GM12878 (cell line): ENCODE measurements at regions of chr1 and their contacts with region 1.

Region 1: GRCh38 chr1:74689621-74690363 is 16.2 kb upstream of the ERICH3 start:
- DNase-seq: no peak
- ATAC-seq: peak; percentile 78
- H3K4me3 ChIP-seq: no peak overlapping the region
- H3K27ac ChIP-seq: no peak overlapping the region
- H3K4me1 ChIP-seq: no peaks in the 10 kb centered on the region; the same call in 1 of the 2 replicates
- H3K27me3 ChIP-seq: no peaks in the 10 kb centered on the region
- CTCF ChIP-seq: peak; percentile 63 to 83 (median 78)
- EP300 ChIP-seq: no peak
- POLR2A ChIP-seq: no peak
- RAD21 ChIP-seq: peak; percentile 96

Region 2: GRCh38 chr1:73839922-73840321 is 849.9 kb before region 1 on chr1:
- CTCF ChIA-PET with region 1: interaction called, 16 read pairs
- POLR2A ChIA-PET with region 1: no interaction called
- RAD21 ChIA-PET with region 1: interaction called, 5 read pairs
- SMC1A ChIA-PET with region 1: interaction called, 3 read pairs
- in situ Hi-C with region 1: loop called (anchors 10 kb)
- intact Hi-C with region 1: loop called (anchors 2 kb)
- DNase-seq: no peak
- ATAC-seq: peak; percentile 32; the same call in 1 of the 3 replicates
- H3K4me3 ChIP-seq: no peak overlapping the region
- H3K27ac ChIP-seq: no peak overlapping the region
- H3K4me1 ChIP-seq: no peaks in the 10 kb centered on the region
- H3K27me3 ChIP-seq: no peaks in the 10 kb centered on the region
- CTCF ChIP-seq: peak; percentile 23 to 51 (median 35); a peak in 5 of 6 replicates
- EP300 ChIP-seq: no peak
- POLR2A ChIP-seq: no peak
- RAD21 ChIP-seq: peak; percentile 48; the same call in 1 of the 2 replicates

Region 3: DNA sequence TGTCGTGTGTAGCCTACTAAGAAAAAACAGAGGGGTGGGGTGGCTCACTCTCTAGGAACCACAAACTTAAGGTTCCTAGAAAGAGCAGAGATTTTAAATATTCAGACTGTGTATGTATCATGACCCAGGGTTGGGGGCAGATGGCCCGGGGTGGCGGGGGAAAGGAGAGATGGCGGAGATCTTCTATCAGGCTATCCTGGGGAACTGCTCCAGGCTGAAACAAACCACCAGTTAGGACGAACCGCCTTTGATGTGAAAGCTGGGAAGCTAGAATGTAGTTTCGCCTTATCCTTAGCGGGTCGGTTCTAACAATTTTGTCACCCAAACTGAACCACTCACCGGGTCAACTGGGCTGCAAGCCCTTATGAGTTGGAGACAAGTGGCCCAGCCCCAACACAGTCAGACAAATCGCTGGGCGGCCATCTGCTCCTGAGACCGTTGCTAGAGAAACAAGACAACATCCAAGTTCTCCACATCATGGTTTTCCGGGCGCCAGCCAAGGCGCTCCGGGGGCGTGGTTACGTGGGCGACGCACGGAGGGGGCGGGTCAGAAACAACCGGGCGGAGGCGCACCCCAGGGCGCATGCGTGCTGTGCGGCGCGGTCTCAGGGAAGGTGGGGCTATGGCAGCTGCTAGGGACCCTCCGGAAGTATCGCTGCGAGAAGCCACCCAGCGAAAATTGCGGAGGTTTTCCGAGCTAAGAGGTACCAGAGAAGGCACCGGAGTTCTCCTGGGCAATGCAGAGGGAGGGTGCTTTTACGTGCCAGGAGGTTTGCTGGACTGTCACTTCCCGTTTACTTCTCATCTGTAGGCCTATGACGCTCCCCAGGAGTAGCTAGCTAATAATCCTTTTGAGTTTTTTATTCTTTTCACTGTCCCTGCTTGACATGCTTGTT is 491.9 kb before region 1 on chr1 and contains the starts of genes FPGT and LRRIQ3:
- CTCF ChIA-PET with region 1: no interaction called
- POLR2A ChIA-PET with region 1: no interaction called
- RAD21 ChIA-PET with region 1: no interaction called
- SMC1A ChIA-PET with region 1: no interaction called
- in situ Hi-C with region 1: no loop called
- intact Hi-C with region 1: loop called (anchors 5 kb)
- DNase-seq: peak; percentile 84
- ATAC-seq: peak; percentile 96
- H3K4me3 ChIP-seq: peak within 1 kb of the TSS; percentile 82
- H3K27ac ChIP-seq: peak within 1 kb of the TSS; percentile 72
- H3K4me1 ChIP-seq: 0 out of 2 replicates have a peak, but pooled peaks cover 5% of the 10 kb centered on the region
- H3K27me3 ChIP-seq: no peaks in the 10 kb centered on the region
- CTCF ChIP-seq: no peak
- EP300 ChIP-seq: no peak
- POLR2A ChIP-seq: peak; percentile 89
- RAD21 ChIP-seq: no peak
- polyA plus RNA-seq, gene FPGT: 7.8 to 11.9 TPM
- polyA plus RNA-seq, gene LRRIQ3: 3.4 to 4.7 TPM

Region 4: GRCh38 chr1:74504125-74504932 is 185.5 kb before region 1 on chr1:
- CTCF ChIA-PET with region 1: interaction called, 61 read pairs
- POLR2A ChIA-PET with region 1: no interaction called
- RAD21 ChIA-PET with region 1: interaction called, 7 read pairs
- SMC1A ChIA-PET with region 1: interaction called, 16 read pairs
- in situ Hi-C with region 1: no loop called
- intact Hi-C with region 1: loop called (anchors 5 kb)
- DNase-seq: peak; percentile 33
- ATAC-seq: peak; percentile 99
- H3K4me3 ChIP-seq: no peak overlapping the region
- H3K27ac ChIP-seq: no peak overlapping the region
- H3K4me1 ChIP-seq: no peaks in the 10 kb centered on the region
- H3K27me3 ChIP-seq: no peaks in the 10 kb centered on the region
- CTCF ChIP-seq: peak; percentile 82 to 89 (median 88)
- EP300 ChIP-seq: no peak
- POLR2A ChIP-seq: no peak
- RAD21 ChIP-seq: peak; percentile 74

Region 5: DNA sequence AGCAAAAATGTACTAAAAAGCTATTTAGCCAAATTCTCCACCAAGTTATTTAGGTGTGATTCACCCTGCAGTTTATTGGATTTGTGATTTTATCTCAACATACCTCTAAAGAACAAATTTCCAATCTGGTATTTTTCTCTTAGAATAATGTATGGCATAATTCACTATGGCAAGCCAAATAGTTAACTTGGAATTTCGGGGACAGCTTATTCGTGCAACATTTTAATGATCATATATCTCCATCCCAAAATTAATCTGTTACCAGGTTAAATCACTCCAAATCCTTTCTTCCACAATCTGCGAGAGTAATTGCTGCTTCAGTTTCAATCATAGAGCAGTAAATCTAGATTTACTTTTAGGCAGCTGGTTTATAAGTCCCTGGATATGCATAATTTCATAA is 69.5 kb before region 1 on chr1:
- CTCF ChIA-PET with region 1: no interaction called
- POLR2A ChIA-PET with region 1: no interaction called
- RAD21 ChIA-PET with region 1: no interaction called
- SMC1A ChIA-PET with region 1: no interaction called
- in situ Hi-C with region 1: no loop called
- intact Hi-C with region 1: no loop called
- DNase-seq: no peak
- ATAC-seq: no peak
- H3K4me3 ChIP-seq: no peak overlapping the region
- H3K27ac ChIP-seq: no peak overlapping the region
- H3K4me1 ChIP-seq: no peaks in the 10 kb centered on the region
- H3K27me3 ChIP-seq: no peaks in the 10 kb centered on the region
- CTCF ChIP-seq: no peak
- EP300 ChIP-seq: no peak
- POLR2A ChIP-seq: no peak
- RAD21 ChIP-seq: no peak

Region 6: GRCh38 chr1:74652597-74653139 is 37.1 kb before region 1 on chr1:
- CTCF ChIA-PET with region 1: interaction called, 10 read pairs
- POLR2A ChIA-PET with region 1: no interaction called
- RAD21 ChIA-PET with region 1: interaction called, 6 read pairs
- SMC1A ChIA-PET with region 1: interaction called, 16 read pairs
- in situ Hi-C with region 1: no loop called
- intact Hi-C with region 1: no loop called
- DNase-seq: peak; percentile 83
- ATAC-seq: peak; percentile 97
- H3K4me3 ChIP-seq: no peak overlapping the region
- H3K27ac ChIP-seq: peak overlapping the region; percentile 7; the same call in 1 of the 2 replicates
- H3K4me1 ChIP-seq: peaks cover 14% of the 10 kb centered on the region
- H3K27me3 ChIP-seq: no peaks in the 10 kb centered on the region
- CTCF ChIP-seq: no peak
- EP300 ChIP-seq: peak in 1 of 2 experiments; percentile 50; a peak in 1 of 4 replicates
- POLR2A ChIP-seq: no peak
- RAD21 ChIP-seq: no peak

Region 7: GRCh38 chr1:74714429-74715235 is 24.8 kb after region 1 on chr1:
- CTCF ChIA-PET with region 1: interaction called, 16 read pairs
- POLR2A ChIA-PET with region 1: no interaction called
- RAD21 ChIA-PET with region 1: interaction called, 3 read pairs
- SMC1A ChIA-PET with region 1: interaction called, 8 read pairs
- in situ Hi-C with region 1: no loop called
- intact Hi-C with region 1: no loop called
- DNase-seq: no peak
- ATAC-seq: peak; percentile 83
- H3K4me3 ChIP-seq: peak overlapping the region; percentile 30; the same call in 1 of the 2 replicates
- H3K27ac ChIP-seq: peak overlapping the region; percentile 57
- H3K4me1 ChIP-seq: peaks cover 26% of the 10 kb centered on the region
- H3K27me3 ChIP-seq: no peaks in the 10 kb centered on the region
- CTCF ChIP-seq: no peak
- EP300 ChIP-seq: no peak; a peak in 1 of 4 replicates
- POLR2A ChIP-seq: no peak
- RAD21 ChIP-seq: no peak